ENCODE measurements at regions of chr2 and their contacts with region 1.

Region 1: DNA sequence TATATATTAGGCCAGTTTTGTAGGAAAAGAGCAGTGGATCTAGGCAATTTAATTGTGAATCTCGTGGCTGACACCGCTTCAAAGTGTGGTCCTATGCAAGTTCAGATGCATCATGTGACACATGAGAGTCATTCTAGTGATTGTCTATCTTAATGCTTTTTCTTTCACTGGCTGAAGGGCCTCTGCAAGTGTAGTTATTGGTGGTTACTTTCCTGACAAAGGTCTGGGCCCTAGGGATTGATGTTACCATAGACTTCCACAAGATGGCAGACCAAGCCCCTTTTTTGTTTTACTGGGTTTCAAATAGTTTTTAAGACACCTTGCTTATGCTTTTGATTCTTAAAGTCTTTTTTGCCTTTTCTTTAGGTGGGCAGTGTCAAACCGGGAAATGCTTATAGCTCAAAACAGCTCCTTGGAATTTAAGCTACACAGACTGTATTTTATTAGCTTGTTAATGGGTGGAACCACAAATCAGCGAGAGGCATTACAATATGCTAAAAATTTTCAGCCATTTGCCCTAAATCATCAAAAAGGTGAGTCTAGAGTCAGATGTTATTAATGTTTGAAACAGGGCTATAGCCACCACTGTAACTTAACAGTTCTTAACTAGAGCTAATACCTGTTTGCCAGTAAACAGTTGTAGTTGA is 25.9 kb downstream of the CD8A start:
- DNase-seq: peak in 4 of 5 donors; percentile 17 to 27 (median 23)
- H3K4me3 ChIP-seq: no peak overlapping the region
- H3K4me3 Mint-ChIP-seq: no peak overlapping the region
- H3K27ac ChIP-seq: no peak overlapping the region
- H3K27ac Mint-ChIP-seq: peak overlapping the region in 4 of 7 donors; percentile 0 to 43 (median 28)
- H3K4me1 ChIP-seq: no peaks in the 10 kb centered on the region
- H3K4me1 Mint-ChIP-seq: peaks cover 12 to 19% (median 13%) of the 10 kb centered on the region in 4 donors
- H3K27me3 ChIP-seq: no peaks in the 10 kb centered on the region
- H3K27me3 Mint-ChIP-seq: no peaks in the 10 kb centered on the region

Region 2: DNA sequence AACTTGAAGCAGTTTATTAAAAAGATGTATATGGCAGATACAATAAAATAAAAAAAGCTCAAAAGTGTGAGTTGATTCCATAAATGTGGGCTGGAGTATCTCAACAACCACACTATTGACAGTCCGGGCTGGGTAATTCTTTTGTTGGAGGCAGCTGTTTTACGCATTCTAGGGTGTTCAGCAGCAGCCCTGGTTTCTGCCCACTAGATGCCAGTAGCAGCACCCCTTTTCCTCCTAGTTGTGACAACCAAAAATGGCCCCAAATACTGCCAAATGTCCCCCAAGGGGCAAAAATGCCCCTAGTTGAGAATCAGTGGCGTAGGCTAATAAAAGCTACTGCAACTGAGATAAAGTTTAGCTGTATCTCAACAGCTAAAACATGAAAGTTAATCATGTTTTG is 246.3 kb before region 1 on chr2:
- CTCF ChIA-PET with region 1: interaction called, 7 read pairs
- POLR2A ChIA-PET with region 1: no interaction called
- intact Hi-C with region 1: loop called (anchors 10 kb)
- DNase-seq: peak; percentile 36 to 43 (median 42)
- H3K4me3 ChIP-seq: no peak overlapping the region
- H3K4me3 Mint-ChIP-seq: no peak overlapping the region
- H3K27ac ChIP-seq: no peak overlapping the region
- H3K27ac Mint-ChIP-seq: peak overlapping the region in 1 of 7 donors; percentile 18
- H3K4me1 ChIP-seq: no peaks in the 10 kb centered on the region
- H3K4me1 Mint-ChIP-seq: peaks cover 0 to 11% (median 3%) of the 10 kb centered on the region in 4 donors
- H3K27me3 ChIP-seq: no peaks in the 10 kb centered on the region
- H3K27me3 Mint-ChIP-seq: no peaks in the 10 kb centered on the region

Region 3: GRCh38 chr2:86753606-86754005 is 11.2 kb before region 1 on chr2:
- CTCF ChIA-PET with region 1: interaction called, 35 read pairs
- POLR2A ChIA-PET with region 1: no interaction called
- intact Hi-C with region 1: no loop called
- DNase-seq: no peak
- H3K4me3 ChIP-seq: no peak overlapping the region
- H3K4me3 Mint-ChIP-seq: no peak overlapping the region
- H3K27ac ChIP-seq: no peak overlapping the region
- H3K27ac Mint-ChIP-seq: no peak overlapping the region
- H3K4me1 ChIP-seq: no peaks in the 10 kb centered on the region
- H3K4me1 Mint-ChIP-seq: peaks cover 13 to 26% (median 24%) of the 10 kb centered on the region in 4 donors
- H3K27me3 ChIP-seq: no peaks in the 10 kb centered on the region
- H3K27me3 Mint-ChIP-seq: no peaks in the 10 kb centered on the region